CD8-positive, alpha-beta T cell (primary cell): ENCODE measurements at regions of chr19 and their contacts with region 1.

Region 1: GRCh38 chr19:3572132-3572854 is 451 bp upstream of the HMG20B start:
- DNase-seq: peak; percentile 98 to 100 (median 99)
- ATAC-seq: peak; percentile 95
- H3K4me3 ChIP-seq: peak overlapping the region; percentile 66 to 68
- H3K4me3 Mint-ChIP-seq: peak overlapping the region; percentile 77
- H3K27ac ChIP-seq: peak overlapping the region; percentile 60 to 65
- H3K27ac Mint-ChIP-seq: no peak overlapping the region
- H3K4me1 ChIP-seq: peaks cover 15% of the 10 kb centered on the region
- H3K4me1 Mint-ChIP-seq: peaks cover 18% of the 10 kb centered on the region
- H3K27me3 ChIP-seq: no peaks in the 10 kb centered on the region
- H3K27me3 Mint-ChIP-seq: no peaks in the 10 kb centered on the region
- CTCF ChIP-seq: no peak

Region 2: DNA sequence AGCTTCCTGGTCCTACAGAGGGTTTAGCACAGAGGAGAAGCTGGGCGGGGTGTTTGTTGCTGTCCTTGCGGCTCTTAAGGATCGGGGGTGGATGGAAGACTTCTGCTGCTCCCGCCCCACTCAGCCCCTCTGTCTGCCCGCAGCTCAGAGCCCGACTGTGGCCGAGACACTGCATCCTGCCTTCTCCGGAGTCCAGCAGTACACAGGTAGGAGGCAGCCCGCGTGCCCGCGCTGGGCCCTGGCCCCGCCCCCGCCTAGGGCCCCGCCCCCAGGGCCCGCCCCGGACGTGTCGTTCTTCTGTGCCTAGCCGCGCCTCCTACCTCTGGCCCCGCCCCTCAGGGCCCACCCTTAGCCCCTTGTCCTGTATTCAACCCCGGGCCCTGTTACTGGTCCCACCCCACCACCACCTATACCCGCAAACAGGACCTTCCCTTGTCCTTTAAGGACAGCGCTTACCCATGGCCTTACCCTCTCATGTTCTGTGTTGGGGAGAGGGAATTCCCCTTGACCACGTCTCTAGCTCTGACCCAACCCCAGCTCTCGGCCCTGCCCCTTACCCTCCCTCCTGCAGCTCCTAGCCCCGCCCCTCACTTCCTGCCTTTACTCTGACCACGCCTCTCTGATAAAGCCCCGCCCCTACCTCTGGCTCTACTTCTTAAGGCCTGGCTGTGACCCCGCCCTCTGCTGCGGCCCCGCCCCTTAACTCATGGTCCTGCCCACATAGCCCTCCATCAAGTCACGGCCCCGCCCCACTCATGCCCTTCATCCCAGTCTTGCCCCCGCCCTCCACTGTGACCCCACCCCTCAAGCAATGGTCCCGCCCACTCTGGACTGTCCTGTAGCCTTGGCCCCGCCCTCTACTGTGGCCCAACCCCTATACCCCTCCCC is 287.3 kb before region 1 on chr19:
- CTCF ChIA-PET with region 1: no interaction called
- POLR2A ChIA-PET with region 1: no interaction called
- intact Hi-C with region 1: loop called in 1 of 2 experiments (anchors 2 kb)
- DNase-seq: peak; percentile 20 to 87 (median 66)
- ATAC-seq: peak; percentile 80
- H3K4me3 ChIP-seq: peak overlapping the region; percentile 20
- H3K4me3 Mint-ChIP-seq: peak overlapping the region; percentile 47
- H3K27ac ChIP-seq: no peak overlapping the region
- H3K27ac Mint-ChIP-seq: no peak overlapping the region
- H3K4me1 ChIP-seq: peaks cover 15% of the 10 kb centered on the region
- H3K4me1 Mint-ChIP-seq: peaks cover 13% of the 10 kb centered on the region
- H3K27me3 ChIP-seq: peaks cover 0 to 2% of the 10 kb centered on the region in 2 experiments
- H3K27me3 Mint-ChIP-seq: peaks cover 7% of the 10 kb centered on the region
- CTCF ChIP-seq: no peak

Region 3: GRCh38 chr19:3505598-3506383 is 66.5 kb before region 1 on chr19 and contains the start of gene FZR1:
- CTCF ChIA-PET with region 1: no interaction called
- POLR2A ChIA-PET with region 1: no interaction called
- intact Hi-C with region 1: loop called (anchors 1 to 2 kb)
- DNase-seq: peak; percentile 99 to 100 (median 100)
- ATAC-seq: peak; percentile 85
- H3K4me3 ChIP-seq: peak within 1 kb of the TSS; percentile 76 to 83
- H3K4me3 Mint-ChIP-seq: peak within 1 kb of the TSS; percentile 85
- H3K27ac ChIP-seq: peak within 1 kb of the TSS; percentile 97
- H3K27ac Mint-ChIP-seq: peak within 1 kb of the TSS; percentile 97
- H3K4me1 ChIP-seq: peaks cover 36% of the 10 kb centered on the region
- H3K4me1 Mint-ChIP-seq: peaks cover 48% of the 10 kb centered on the region
- H3K27me3 ChIP-seq: no peaks in the 10 kb centered on the region
- H3K27me3 Mint-ChIP-seq: no peaks in the 10 kb centered on the region
- CTCF ChIP-seq: no peak
- total RNA-seq, gene FZR1: 130 to 142 TPM

Region 4: DNA sequence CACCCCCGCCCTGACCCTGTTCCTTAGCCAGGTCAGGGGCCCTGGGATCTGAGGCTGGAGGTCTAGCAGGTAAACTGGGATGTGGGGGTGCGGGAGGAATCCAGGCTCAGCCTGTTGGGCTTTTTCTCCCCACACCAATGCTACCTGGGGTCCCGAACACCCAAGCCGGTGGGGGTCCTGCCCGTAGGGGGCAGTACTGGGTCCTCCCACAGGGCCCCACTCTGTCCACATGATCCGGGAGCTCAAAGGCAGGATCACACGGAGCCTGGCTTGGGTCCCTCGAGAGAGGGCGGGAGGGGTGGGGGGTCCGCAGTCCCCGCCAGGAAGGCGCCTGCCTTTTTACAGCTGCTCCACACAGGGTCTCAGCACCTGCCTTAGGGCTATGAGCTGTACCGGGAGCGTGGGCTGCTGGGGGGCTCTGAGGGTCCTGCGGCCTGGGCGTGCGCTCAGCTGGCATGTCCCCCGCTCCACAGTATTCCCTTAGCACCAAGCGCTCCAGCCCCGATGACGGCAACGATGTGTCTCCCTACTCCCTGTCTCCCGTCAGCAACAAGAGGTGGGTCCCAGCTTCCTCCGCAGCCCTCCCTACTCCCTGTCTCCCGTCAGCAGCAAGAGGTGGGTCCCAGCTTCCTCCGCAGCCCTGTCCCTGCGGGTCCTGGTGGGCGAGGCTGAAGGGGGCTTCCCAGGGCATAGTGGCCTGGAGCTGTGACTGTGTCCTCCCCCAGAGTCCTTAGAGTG is 45.6 kb before region 1 on chr19:
- CTCF ChIA-PET with region 1: no interaction called
- POLR2A ChIA-PET with region 1: no interaction called
- intact Hi-C with region 1: no loop called
- DNase-seq: no peak
- ATAC-seq: no peak
- H3K4me3 ChIP-seq: no peak overlapping the region
- H3K4me3 Mint-ChIP-seq: no peak overlapping the region
- H3K27ac ChIP-seq: no peak overlapping the region
- H3K27ac Mint-ChIP-seq: no peak overlapping the region
- H3K4me1 ChIP-seq: no peaks in the 10 kb centered on the region
- H3K4me1 Mint-ChIP-seq: peaks cover 1% of the 10 kb centered on the region
- H3K27me3 ChIP-seq: no peaks in the 10 kb centered on the region
- H3K27me3 Mint-ChIP-seq: no peaks in the 10 kb centered on the region
- CTCF ChIP-seq: no peak